Cardiac septum (tissue), 1 donor: ENCODE measurements at regions of chr9 and their contacts with region 1.

Region 1: GRCh38 chr9:100505564-100506159 is 32.7 kb downstream of the TMEFF1 start:
- DNase-seq: no peak

Region 2: GRCh38 chr9:100449420-100449819 is 56.2 kb before region 1 on chr9:
- intact Hi-C with region 1: no loop called
- DNase-seq: no peak

Region 3: DNA sequence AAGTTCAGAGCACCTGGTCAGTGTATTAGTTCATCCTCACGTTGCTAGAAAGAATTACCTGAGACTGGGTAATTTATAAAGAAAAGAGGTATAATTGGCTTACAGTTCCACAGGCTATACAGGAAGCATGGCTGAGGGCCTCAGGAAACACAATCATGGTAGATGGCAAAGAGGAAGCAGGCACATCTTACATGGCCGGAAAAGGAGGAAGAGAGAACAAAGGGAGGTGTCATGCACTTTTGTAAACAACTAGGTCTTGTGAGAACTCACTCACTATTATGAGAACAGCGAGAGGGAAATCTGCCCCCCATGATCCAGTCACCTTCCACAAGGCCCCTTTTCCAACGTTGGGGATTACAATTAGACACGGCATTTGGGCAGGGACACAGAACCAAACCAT is 43.4 kb after region 1 on chr9:
- intact Hi-C with region 1: no loop called
- DNase-seq: no peak

Region 4: DNA sequence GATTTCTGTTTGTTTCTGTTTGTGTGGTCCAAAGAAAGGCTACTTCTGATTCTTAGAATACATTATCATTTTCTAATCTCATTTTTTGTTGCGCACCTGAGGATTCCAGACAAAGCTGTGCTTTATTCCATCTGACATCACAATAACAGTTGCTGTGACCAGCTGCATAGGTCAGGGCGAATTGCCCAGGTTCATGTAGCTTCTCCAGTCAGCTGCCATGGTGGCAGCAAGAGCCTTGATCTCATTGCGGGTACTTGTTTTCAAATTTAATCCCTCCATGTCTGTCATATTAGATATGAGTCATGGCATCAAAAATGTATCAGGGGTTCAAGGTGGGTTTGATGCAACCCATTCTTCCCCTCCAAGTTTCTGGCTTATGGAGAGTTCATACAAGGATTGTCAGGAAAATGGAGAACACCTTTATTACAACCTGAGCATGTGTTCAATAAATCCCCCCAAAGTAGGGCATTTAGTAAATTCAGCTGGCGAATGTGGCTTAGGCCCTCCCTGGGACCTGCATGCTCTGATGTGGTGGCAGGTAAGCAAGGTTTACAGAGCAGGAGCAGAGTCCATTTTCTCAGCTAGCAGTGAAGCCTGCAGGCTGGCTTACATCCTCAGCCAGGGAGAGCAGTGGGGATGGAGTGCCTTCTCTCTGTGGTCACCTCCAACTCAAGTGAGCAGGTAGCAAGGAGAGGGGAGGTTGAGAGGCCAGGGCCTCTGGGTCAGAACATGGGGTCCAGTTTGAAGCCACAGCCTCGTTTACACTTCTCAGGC is 86.2 kb after region 1 on chr9:
- intact Hi-C with region 1: loop called (anchors 2 kb)
- DNase-seq: no peak